ENCODE measurements at regions of chr7 and their contacts with region 1.

Region 1: DNA sequence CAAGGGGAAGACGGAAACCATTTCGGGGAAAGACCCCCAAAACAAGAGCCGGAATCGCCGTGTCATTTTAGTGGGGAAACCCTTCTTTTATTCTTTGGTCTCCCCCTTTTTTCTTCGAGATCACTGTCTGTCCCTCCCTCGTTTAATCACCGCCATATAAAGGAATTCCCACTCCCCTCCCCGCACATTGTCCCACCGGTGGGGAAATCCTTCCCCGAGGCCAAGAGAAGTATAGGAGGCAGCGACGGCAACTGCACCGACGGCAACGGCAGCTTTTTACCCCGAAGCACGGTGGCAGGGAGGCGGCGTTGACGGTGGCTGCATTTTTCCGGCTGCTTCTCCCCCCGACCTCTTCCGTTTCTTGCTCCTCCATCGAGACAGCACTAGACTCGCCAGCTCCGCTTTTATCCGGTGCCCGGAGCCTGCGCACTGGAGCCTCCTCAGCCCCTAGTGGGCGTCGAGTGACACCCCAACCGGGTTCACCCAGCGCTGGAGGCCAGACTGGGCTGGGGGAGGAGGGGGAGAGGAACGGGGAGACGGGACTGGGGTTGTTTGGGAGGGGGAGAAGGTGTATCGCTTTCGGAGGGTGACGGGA is 687 bp upstream of the KMT2E start:
- DNase-seq: peak; percentile 91 to 95 (median 94)
- H3K4me3 ChIP-seq: peak overlapping the region; percentile 76 to 100 (median 99)
- H3K4me3 Mint-ChIP-seq: peak overlapping the region; percentile 97 to 98
- H3K27ac ChIP-seq: peak overlapping the region; percentile 94 to 100
- H3K27ac Mint-ChIP-seq: peak overlapping the region; percentile 100
- H3K4me1 ChIP-seq: peaks cover 41 to 61% of the 10 kb centered on the region in 2 donors
- H3K4me1 Mint-ChIP-seq: peaks cover 40% of the 10 kb centered on the region
- H3K27me3 ChIP-seq: no peaks in the 10 kb centered on the region
- H3K27me3 Mint-ChIP-seq: peaks cover 0 to 8% (median 4%) of the 10 kb centered on the region in 3 donors
- CTCF ChIP-seq: peak; percentile 68

Region 2: DNA sequence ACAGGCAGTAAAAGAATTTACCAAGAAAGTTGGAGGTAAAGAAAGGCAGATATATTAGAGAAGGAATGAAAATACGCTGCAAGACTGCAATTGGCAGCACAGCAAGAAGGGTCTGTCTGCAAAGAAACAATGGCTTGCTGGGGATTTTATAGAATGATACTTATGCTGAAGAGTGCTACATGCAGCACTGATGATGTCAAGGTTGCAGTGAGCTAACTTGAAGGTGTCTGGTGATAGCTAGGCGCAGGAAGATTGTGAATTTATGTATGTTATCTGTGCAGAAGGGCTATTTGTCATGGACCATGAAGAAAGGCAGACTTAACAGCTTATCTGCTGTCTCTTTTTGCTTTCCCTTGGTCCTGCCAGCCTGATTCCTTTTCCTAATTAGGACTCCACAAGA is 318.6 kb before region 1 on chr7:
- intact Hi-C with region 1: no loop called
- DNase-seq: no peak
- H3K4me3 ChIP-seq: no peak overlapping the region
- H3K4me3 Mint-ChIP-seq: no peak overlapping the region
- H3K27ac ChIP-seq: no peak overlapping the region
- H3K27ac Mint-ChIP-seq: no peak overlapping the region
- H3K4me1 ChIP-seq: no peaks in the 10 kb centered on the region
- H3K4me1 Mint-ChIP-seq: no peaks in the 10 kb centered on the region
- H3K27me3 ChIP-seq: no peaks in the 10 kb centered on the region
- H3K27me3 Mint-ChIP-seq: peaks cover 1 to 4% (median 2%) of the 10 kb centered on the region in 3 donors
- CTCF ChIP-seq: no peak

Region 3: GRCh38 chr7:104943502-104944343 is 69.6 kb before region 1 on chr7:
- intact Hi-C with region 1: loop called (anchors 1 to 10 kb)
- DNase-seq: peak in 2 of 3 donors; percentile 36 to 55
- H3K4me3 ChIP-seq: peak overlapping the region in 1 of 3 experiments; percentile 31
- H3K4me3 Mint-ChIP-seq: peak overlapping the region; percentile 56 to 60
- H3K27ac ChIP-seq: peak overlapping the region; percentile 93 to 99
- H3K27ac Mint-ChIP-seq: peak overlapping the region; percentile 99 to 100 (median 100)
- H3K4me1 ChIP-seq: peaks cover 49 to 61% of the 10 kb centered on the region in 2 donors
- H3K4me1 Mint-ChIP-seq: peaks cover 56% of the 10 kb centered on the region
- H3K27me3 ChIP-seq: no peaks in the 10 kb centered on the region
- H3K27me3 Mint-ChIP-seq: no peaks in the 10 kb centered on the region
- CTCF ChIP-seq: no peak

Region 4: DNA sequence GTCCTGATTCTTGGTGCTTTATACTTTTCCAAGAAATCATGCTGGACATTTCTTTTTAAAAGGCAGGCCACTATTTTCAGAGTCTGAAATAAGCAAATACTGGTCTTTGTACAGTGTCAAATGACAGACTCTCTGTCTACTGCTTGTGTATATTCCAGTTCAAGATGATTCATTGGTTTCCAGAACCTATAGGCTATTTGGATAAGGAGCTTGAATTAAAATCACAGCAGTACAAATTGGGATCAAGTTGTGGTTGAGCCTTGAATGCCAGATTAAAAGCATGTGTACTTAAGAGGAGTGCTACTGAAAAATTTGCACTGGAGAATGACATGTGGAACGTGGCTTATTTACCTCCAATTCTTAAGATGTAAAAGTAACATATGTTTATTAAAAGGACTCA is 11.4 kb after region 1 on chr7:
- intact Hi-C with region 1: loop called in 1 of 2 experiments (anchors 1 kb)
- DNase-seq: no peak
- H3K4me3 ChIP-seq: no peak overlapping the region
- H3K4me3 Mint-ChIP-seq: no peak overlapping the region
- H3K27ac ChIP-seq: no peak overlapping the region
- H3K27ac Mint-ChIP-seq: no peak overlapping the region
- H3K4me1 ChIP-seq: peaks cover 44 to 85% of the 10 kb centered on the region in 2 donors
- H3K4me1 Mint-ChIP-seq: peaks cover 81% of the 10 kb centered on the region
- H3K27me3 ChIP-seq: no peaks in the 10 kb centered on the region
- H3K27me3 Mint-ChIP-seq: peaks cover 0 to 2% (median 0%) of the 10 kb centered on the region in 3 donors
- CTCF ChIP-seq: no peak

Region 5: GRCh38 chr7:105046414-105046813 is 33.1 kb after region 1 on chr7:
- intact Hi-C with region 1: no loop called
- DNase-seq: no peak
- H3K4me3 ChIP-seq: no peak overlapping the region
- H3K4me3 Mint-ChIP-seq: no peak overlapping the region
- H3K27ac ChIP-seq: peak overlapping the region in 1 of 2 donors; percentile 12
- H3K27ac Mint-ChIP-seq: no peak overlapping the region
- H3K4me1 ChIP-seq: no peaks in the 10 kb centered on the region
- H3K4me1 Mint-ChIP-seq: peaks cover 8% of the 10 kb centered on the region
- H3K27me3 ChIP-seq: no peaks in the 10 kb centered on the region
- H3K27me3 Mint-ChIP-seq: no peaks in the 10 kb centered on the region
- CTCF ChIP-seq: no peak